ENCODE measurements at regions of chr13 and their contacts with region 1.

Region 1: DNA sequence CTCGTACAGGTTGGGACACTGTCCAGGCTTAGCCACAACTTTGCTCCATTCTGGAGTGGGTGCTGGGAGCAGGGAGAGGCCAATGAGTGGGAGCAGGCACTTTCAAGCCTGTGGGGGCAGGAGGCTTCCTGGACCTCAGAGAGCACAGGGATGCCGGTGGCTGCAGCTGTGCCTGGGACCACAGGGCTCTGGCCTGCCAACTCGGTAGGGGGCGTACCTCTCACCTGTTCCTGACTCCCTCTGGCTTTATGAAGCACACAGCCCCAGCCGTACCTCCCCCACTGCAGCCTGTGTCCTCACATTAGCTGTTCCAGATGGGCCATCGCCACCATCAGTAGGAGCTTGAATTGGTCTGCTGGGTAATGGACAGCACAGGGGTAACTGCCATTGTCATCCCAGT is 278.7 kb upstream of the KLHL1 start:
- DNase-seq: no peak
- H3K4me3 ChIP-seq: no peak overlapping the region
- H3K27ac ChIP-seq: no peak overlapping the region
- H3K4me1 ChIP-seq: no peaks in the 10 kb centered on the region
- H3K27me3 ChIP-seq: no peaks in the 10 kb centered on the region
- CTCF ChIP-seq: no peak
- POLR2A ChIP-seq: no peak

Region 2: DNA sequence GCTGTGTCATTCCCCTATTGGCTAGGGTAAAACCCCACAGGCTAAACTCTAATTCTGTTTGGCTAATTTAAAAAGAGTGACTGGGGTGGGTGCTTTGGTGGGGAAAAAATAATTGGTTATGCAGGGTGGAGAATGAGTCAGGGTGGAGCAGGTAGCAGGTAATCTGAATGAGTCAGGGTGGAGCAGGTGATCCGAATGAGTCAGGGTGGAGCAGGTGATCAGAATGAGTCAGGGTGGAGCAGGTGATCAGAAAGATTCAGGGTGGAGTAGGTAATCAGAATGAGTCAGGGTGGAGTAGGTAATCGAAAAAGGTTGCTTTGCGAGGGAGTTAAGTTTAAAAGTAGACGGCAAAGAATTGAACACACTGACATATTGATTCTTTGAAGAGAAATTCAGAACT is 1498.1 kb before region 1 on chr13:
- intact Hi-C with region 1: no loop called
- DNase-seq: no peak
- H3K4me3 ChIP-seq: no peak overlapping the region
- H3K27ac ChIP-seq: no peak overlapping the region
- H3K4me1 ChIP-seq: no peaks in the 10 kb centered on the region
- H3K27me3 ChIP-seq: no peaks in the 10 kb centered on the region
- CTCF ChIP-seq: no peak
- POLR2A ChIP-seq: no peak

Region 3: DNA sequence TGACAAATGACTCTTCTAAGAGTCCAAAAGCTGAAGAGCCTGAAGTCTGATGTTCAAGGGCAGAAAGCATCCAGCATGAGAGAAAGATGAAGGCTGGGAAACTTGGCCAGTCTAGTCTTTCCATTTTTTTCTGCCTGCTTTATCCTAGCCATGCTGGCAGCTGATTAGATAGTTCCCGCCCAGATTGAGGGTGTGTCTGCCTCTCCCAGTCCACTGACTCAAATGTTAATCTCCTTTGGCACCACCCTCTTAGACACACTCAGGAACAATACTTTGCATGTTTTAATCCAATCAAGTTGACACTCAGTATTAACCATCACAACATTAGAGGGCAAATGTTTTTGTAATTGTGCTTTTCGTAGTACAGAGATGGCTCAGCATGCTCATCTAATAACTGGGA is 11.2 kb before region 1 on chr13:
- intact Hi-C with region 1: loop called (anchors 1 kb)
- DNase-seq: no peak
- H3K4me3 ChIP-seq: no peak overlapping the region
- H3K27ac ChIP-seq: no peak overlapping the region
- H3K4me1 ChIP-seq: no peaks in the 10 kb centered on the region
- H3K27me3 ChIP-seq: no peaks in the 10 kb centered on the region
- CTCF ChIP-seq: no peak
- POLR2A ChIP-seq: no peak

Measured in breast epithelium (tissue), 4 donors.